Sigmoid colon (tissue), 7 donors: ENCODE measurements at regions of chr19 and their contacts with region 1.

Region 1: GRCh38 chr19:40190891-40191835 is at the start of gene MAP3K10:
- DNase-seq: peak; percentile 87
- H3K4me3 ChIP-seq: peak within 1 kb of the TSS; percentile 81 to 99 (median 95)
- H3K27ac ChIP-seq: peak within 1 kb of the TSS; percentile 97 to 100 (median 99)
- H3K4me1 ChIP-seq: peaks cover 0 to 31% (median 21%) of the 10 kb centered on the region in 4 donors
- H3K27me3 ChIP-seq: no peaks in the 10 kb centered on the region
- CTCF ChIP-seq: no peak
- EP300 ChIP-seq: no peak
- POLR2A ChIP-seq: no peak
- total RNA-seq, gene MAP3K10: 6.4 to 17.2 (median 10.5) TPM

Region 2: GRCh38 chr19:40285353-40286234 is 94.4 kb after region 1 on chr19:
- intact Hi-C with region 1: loop called (anchors 5 kb)
- DNase-seq: peak; percentile 100
- H3K4me3 ChIP-seq: peak overlapping the region; percentile 91 to 100 (median 98)
- H3K27ac ChIP-seq: peak overlapping the region; percentile 96 to 99 (median 98)
- H3K4me1 ChIP-seq: peaks cover 0 to 47% (median 42%) of the 10 kb centered on the region in 4 donors
- H3K27me3 ChIP-seq: no peaks in the 10 kb centered on the region
- CTCF ChIP-seq: no peak
- EP300 ChIP-seq: peak in 1 of 4 donors; percentile 55
- POLR2A ChIP-seq: no peak

Region 3: GRCh38 chr19:40300668-40301067 is 109.5 kb after region 1 on chr19:
- intact Hi-C with region 1: no loop called
- DNase-seq: no peak
- H3K4me3 ChIP-seq: no peak overlapping the region
- H3K27ac ChIP-seq: no peak overlapping the region
- H3K4me1 ChIP-seq: peaks cover 0 to 3% (median 0%) of the 10 kb centered on the region in 4 donors
- H3K27me3 ChIP-seq: no peaks in the 10 kb centered on the region
- CTCF ChIP-seq: no peak
- EP300 ChIP-seq: no peak
- POLR2A ChIP-seq: no peak